ENCODE measurements at regions of chr18 and their contacts with region 1.

Region 1: DNA sequence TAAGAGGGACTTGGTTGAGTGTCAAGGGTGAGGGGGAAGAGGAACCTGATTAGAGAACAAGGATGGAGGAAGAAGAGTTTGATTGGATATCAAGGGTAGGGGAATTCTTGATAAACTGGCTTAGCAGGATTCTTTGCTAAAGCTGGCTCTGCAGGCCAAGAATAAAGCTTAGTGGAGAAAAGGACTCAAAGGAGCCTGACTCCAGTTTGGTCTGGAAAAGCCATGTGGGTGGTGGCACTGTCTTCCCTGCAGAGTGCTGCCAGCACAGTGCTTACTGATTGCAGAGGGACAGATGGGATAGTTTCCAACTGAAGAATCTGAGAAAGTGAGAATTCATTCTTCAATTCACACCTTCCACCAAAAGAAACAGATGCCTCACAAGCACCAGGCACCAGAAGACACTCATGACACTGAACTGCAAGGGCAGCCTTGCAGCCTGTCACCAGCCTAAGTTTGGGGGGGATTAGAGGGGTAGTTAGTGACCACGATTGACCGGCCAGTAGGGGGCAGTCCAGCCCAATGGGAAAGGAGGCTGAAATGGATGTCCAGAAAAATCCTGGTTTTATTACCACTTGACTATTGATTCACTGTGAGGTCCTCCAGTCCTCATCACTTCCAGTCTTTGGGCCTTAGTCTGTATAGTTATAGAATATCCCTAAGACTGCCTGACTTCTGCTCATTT is 334.5 kb downstream of the SMAD2 start:
- DNase-seq: peak; percentile 72
- CTCF ChIP-seq: peak; percentile 58

Region 2: DNA sequence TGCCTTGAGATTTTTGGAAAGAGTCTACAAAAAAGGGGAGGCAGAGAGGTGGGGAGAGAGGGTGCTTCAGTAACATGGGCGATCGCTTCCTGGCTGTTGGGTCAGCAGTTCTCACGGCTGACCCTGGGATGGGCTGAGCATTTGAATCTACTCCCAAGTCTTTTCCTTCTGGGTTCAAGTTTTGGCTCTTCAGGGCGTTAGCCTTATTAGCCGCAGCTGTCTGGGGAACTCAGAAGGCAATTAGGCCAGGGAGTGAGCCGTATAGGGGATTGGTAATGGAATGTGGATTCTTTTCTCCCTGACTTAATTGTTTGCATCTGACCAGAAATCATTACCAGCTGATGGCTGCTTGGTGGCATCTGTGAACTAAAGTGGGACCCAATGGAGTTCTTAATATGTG is 94.0 kb before region 1 on chr18:
- in situ Hi-C with region 1: no loop called
- DNase-seq: no peak
- CTCF ChIP-seq: no peak

Region 3: GRCh38 chr18:47748847-47749599 is 153.1 kb after region 1 on chr18:
- in situ Hi-C with region 1: loop called (anchors 10 kb)
- DNase-seq: peak; percentile 92
- CTCF ChIP-seq: peak; percentile 100